Caco-2 (cell line): ENCODE measurements at regions of chr3 and their contacts with region 1.

Region 1: GRCh38 chr3:27484015-27484844 is at the start of gene SLC4A7:
- DNase-seq: peak; percentile 95 to 97
- H3K4me3 ChIP-seq: peak within 1 kb of the TSS; percentile 53
- H3K4me3 Mint-ChIP-seq: peak within 1 kb of the TSS; percentile 98
- H3K27ac Mint-ChIP-seq: peak within 1 kb of the TSS; percentile 85
- H3K4me1 ChIP-seq: no peaks in the 10 kb centered on the region
- H3K4me1 Mint-ChIP-seq: no peaks in the 10 kb centered on the region
- H3K27me3 ChIP-seq: no peaks in the 10 kb centered on the region
- H3K27me3 Mint-ChIP-seq: no peaks in the 10 kb centered on the region
- CTCF ChIP-seq: no peak
- total RNA-seq, gene SLC4A7: 14.9 and 16.9 TPM in 2 replicates

Region 2: GRCh38 chr3:27319847-27320526 is 164.2 kb before region 1 on chr3:
- CTCF ChIA-PET with region 1: no interaction called
- POLR2A ChIA-PET with region 1: no interaction called
- intact Hi-C with region 1: loop called (anchors 5 kb)
- DNase-seq: no peak
- H3K4me3 ChIP-seq: no peak overlapping the region
- H3K4me3 Mint-ChIP-seq: no peak overlapping the region
- H3K27ac Mint-ChIP-seq: no peak overlapping the region
- H3K4me1 ChIP-seq: peaks cover 3% of the 10 kb centered on the region; the same call in 1 of the 2 replicates
- H3K4me1 Mint-ChIP-seq: peaks cover 8% of the 10 kb centered on the region
- H3K27me3 ChIP-seq: no peaks in the 10 kb centered on the region
- H3K27me3 Mint-ChIP-seq: no peaks in the 10 kb centered on the region
- CTCF ChIP-seq: no peak

Region 3: GRCh38 chr3:27357665-27358258 is 126.5 kb before region 1 on chr3:
- CTCF ChIA-PET with region 1: interaction called, 3 read pairs
- POLR2A ChIA-PET with region 1: no interaction called
- intact Hi-C with region 1: loop called (anchors 5 kb)
- DNase-seq: peak; percentile 49 to 64
- H3K4me3 ChIP-seq: no peak overlapping the region
- H3K4me3 Mint-ChIP-seq: no peak overlapping the region
- H3K27ac Mint-ChIP-seq: no peak overlapping the region
- H3K4me1 ChIP-seq: no peaks in the 10 kb centered on the region
- H3K4me1 Mint-ChIP-seq: no peaks in the 10 kb centered on the region
- H3K27me3 ChIP-seq: no peaks in the 10 kb centered on the region
- H3K27me3 Mint-ChIP-seq: peaks cover 10% of the 10 kb centered on the region
- CTCF ChIP-seq: peak in 1 of 2 experiments; percentile 73

Region 4: DNA sequence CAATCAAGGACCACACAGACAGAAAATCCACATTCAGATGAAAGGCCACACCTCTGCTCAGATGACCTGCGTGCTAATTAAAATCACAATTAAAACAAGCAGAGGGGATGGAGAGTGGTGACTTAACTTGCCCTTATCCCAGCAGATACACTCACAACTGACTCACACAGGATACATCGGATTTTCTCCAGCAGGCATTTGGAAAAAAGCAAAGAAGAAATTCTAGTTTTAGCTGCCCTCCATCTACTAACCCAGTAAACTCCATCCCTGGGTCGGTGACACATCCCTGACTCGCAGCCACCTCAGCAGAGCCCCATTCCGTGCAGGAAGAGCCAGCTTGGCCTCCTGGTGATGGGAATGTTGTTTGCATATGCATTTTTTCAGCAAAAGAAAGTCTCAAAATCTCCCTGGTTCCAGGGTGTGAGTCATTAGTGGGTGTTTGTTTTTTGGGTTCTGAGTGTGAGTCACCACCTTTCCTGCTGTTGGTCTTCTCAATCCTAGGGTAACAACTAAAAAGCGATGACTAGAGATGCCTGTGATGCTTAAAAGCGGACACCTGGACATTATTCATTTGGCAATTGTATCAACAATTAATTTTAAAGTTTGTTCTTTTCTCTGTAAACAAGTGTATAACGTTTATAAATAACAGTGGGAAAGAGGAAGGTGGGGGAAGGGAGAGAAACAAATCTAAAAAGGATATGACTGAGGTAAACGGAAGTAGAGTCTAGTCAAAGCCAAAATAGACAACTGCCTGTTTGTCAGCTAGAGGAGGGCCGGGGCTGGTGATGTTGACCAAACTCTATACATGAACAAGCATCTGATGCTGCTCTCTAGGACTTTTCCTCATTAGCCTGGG is 49.7 kb after region 1 on chr3:
- CTCF ChIA-PET with region 1: no interaction called
- POLR2A ChIA-PET with region 1: no interaction called
- intact Hi-C with region 1: loop called (anchors 5 kb)
- DNase-seq: peak; percentile 62 to 72
- H3K4me3 ChIP-seq: no peak overlapping the region
- H3K4me3 Mint-ChIP-seq: peak overlapping the region; percentile 22
- H3K27ac Mint-ChIP-seq: peak overlapping the region; percentile 76
- H3K4me1 ChIP-seq: peaks cover 28% of the 10 kb centered on the region
- H3K4me1 Mint-ChIP-seq: peaks cover 21% of the 10 kb centered on the region
- H3K27me3 ChIP-seq: no peaks in the 10 kb centered on the region
- H3K27me3 Mint-ChIP-seq: no peaks in the 10 kb centered on the region
- CTCF ChIP-seq: no peak

Region 5: DNA sequence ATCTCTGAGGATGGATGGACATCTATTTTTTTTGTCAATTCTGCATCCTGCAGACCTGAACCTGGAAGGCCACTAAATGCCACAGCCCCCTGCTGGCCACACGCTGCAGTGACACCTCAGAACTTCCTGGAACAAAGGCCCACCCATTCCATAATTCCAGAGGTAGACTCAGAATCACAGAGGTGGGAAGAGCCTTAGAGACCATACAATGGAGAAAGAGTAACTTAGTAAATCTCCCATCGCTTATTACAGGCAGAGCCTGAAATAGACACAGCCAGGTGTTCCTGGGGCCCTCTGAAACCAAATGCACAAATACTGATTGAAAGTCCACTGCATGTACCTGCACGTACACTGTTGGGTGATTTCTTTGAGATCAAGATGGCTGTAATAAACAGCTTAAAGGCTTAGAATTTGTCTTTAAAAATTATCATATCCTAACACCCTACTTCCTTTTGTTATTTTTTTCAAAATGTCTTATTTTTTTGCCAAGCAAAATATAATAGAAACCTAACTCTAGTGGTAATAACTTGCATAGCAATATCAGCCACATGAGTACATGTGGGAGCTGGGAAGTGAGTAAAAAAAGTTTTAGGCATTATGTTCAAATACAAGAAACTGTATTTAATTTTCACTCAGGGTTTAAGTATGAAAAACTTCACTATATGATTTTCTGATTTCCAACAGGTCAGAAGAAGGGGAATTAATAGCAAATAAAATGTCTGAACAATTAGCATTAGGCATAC is 175.2 kb after region 1 on chr3:
- CTCF ChIA-PET with region 1: no interaction called
- POLR2A ChIA-PET with region 1: no interaction called
- intact Hi-C with region 1: loop called (anchors 2 kb)
- DNase-seq: peak; percentile 62 to 72
- H3K4me3 ChIP-seq: no peak overlapping the region
- H3K4me3 Mint-ChIP-seq: no peak overlapping the region
- H3K27ac Mint-ChIP-seq: no peak overlapping the region
- H3K4me1 ChIP-seq: no peaks in the 10 kb centered on the region
- H3K4me1 Mint-ChIP-seq: no peaks in the 10 kb centered on the region
- H3K27me3 ChIP-seq: no peaks in the 10 kb centered on the region
- H3K27me3 Mint-ChIP-seq: no peaks in the 10 kb centered on the region
- CTCF ChIP-seq: peak; percentile 72 to 81

Region 6: GRCh38 chr3:27681245-27681748 is 197.1 kb after region 1 on chr3:
- CTCF ChIA-PET with region 1: interaction called, 3 read pairs
- POLR2A ChIA-PET with region 1: no interaction called
- intact Hi-C with region 1: loop called (anchors 5 kb)
- DNase-seq: peak in 1 of 2 experiments; percentile 52
- H3K4me3 ChIP-seq: no peak overlapping the region
- H3K4me3 Mint-ChIP-seq: peak overlapping the region; percentile 68
- H3K27ac Mint-ChIP-seq: peak overlapping the region; percentile 79
- H3K4me1 ChIP-seq: peaks cover 4% of the 10 kb centered on the region
- H3K4me1 Mint-ChIP-seq: no peaks in the 10 kb centered on the region
- H3K27me3 ChIP-seq: no peaks in the 10 kb centered on the region
- H3K27me3 Mint-ChIP-seq: no peaks in the 10 kb centered on the region
- CTCF ChIP-seq: peak; percentile 70 to 72

Region 7: GRCh38 chr3:27789420-27789819 is 305.2 kb after region 1 on chr3:
- CTCF ChIA-PET with region 1: no interaction called
- POLR2A ChIA-PET with region 1: no interaction called
- intact Hi-C with region 1: no loop called
- DNase-seq: no peak
- H3K4me3 ChIP-seq: no peak overlapping the region
- H3K4me3 Mint-ChIP-seq: no peak overlapping the region
- H3K27ac Mint-ChIP-seq: no peak overlapping the region
- H3K4me1 ChIP-seq: no peaks in the 10 kb centered on the region
- H3K4me1 Mint-ChIP-seq: no peaks in the 10 kb centered on the region
- H3K27me3 ChIP-seq: no peaks in the 10 kb centered on the region
- H3K27me3 Mint-ChIP-seq: peaks cover 17% of the 10 kb centered on the region
- CTCF ChIP-seq: no peak

Region 8: DNA sequence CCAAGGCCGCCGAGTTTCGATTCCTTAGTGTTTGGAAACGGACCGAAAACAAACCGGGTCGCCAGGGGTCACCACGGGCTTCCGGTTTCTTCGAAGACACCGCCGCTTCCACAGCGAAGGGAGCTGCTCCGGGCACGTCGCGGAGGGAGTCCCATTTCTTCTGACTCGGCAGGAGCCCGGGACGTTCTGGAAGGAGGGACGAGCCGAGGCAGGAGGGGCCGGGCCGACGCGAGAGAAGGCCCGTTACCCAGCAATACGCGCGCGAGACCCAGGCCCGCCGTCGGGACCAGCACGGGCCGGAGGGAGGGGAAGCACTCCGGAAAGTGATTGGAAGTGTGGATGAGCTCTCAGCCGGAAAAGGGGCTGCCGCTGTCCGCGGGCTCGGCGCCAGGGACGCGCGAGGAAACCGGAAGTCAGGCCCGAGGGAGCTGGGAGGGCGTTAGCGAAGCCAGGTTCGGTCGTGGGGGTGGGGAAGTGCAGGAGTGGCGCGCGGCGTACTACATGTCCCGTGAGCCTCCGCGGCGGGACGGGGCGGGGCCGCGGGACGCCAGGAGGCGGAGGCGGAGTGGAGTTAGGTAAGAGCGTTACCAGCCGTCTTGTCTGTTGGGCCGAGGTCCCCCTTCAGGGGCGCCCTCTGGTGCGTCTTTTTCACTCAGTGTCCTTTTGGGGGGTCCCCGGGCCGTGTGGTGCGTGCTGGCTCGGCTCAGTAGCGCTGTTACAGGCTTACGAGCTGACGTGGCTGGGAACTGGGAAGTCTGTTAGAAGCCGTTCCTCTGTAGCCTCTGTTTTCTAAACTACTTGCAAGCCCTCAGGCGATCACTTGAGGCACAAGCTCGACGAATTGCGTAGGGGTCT is 864.6 kb after region 1 on chr3 and contains the starts of genes AZI2 and ZCWPW2:
- CTCF ChIA-PET with region 1: interaction called, 3 read pairs
- POLR2A ChIA-PET with region 1: interaction called, 3 read pairs
- intact Hi-C with region 1: loop called (anchors 10 kb)
- DNase-seq: peak; percentile 93 to 94
- H3K4me3 ChIP-seq: peak within 1 kb of the TSS; percentile 69
- H3K4me3 Mint-ChIP-seq: peak within 1 kb of the TSS; percentile 99
- H3K27ac Mint-ChIP-seq: peak within 1 kb of the TSS; percentile 99
- H3K4me1 ChIP-seq: no peaks in the 10 kb centered on the region
- H3K4me1 Mint-ChIP-seq: peaks cover 7% of the 10 kb centered on the region
- H3K27me3 ChIP-seq: no peaks in the 10 kb centered on the region
- H3K27me3 Mint-ChIP-seq: no peaks in the 10 kb centered on the region
- CTCF ChIP-seq: peak in 1 of 2 experiments; percentile 38
- total RNA-seq, gene AZI2: 48.9 and 57.4 TPM in 2 replicates
- total RNA-seq, gene ZCWPW2: 0.18 and 0.46 TPM in 2 replicates